Naive thymus-derived CD4-positive, alpha-beta T cell (primary cell): ENCODE measurements at regions of chr6 and their contacts with region 1.

Region 1: DNA sequence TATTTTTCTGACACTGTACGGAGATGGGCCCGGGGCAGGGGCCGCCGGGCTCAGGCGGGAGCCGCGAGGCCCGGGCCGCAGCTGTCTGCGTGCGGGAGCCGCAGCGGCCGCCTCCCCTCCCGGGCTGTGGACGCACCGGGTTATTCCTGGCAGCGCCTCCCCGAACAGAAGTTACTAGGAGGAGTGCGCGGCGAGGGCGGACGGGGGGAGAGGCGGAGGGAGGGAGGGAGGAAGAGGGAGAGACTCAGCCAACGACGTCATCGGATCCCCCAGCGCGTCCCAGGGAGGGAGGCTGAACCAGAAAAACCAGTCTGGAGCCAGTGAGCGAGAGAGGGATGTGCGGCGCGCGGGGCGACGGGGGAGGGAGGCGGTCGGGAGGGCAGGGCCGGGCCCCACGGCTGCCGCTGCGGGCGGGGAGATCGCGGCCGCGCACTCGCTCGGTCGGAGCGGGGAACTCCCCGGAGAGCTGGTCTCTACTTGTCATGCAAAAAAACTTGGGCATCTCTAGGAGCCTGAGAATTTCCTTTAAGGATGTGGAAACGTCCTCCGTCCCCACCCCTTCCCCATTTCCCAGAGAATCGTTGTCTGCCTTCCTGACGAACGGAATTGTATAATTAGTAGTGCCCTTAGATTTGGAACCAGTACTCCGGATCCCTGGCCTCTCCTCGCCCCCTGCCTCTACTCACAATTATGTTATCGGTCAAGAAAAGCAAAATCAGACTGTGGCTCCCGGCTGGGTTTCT is 1.4 kb upstream of the HIVEP2 start:
- DNase-seq: peak; percentile 74 to 98 (median 87)
- ATAC-seq: peak; percentile 65
- H3K4me3 ChIP-seq: peak overlapping the region; percentile 92
- H3K4me3 Mint-ChIP-seq: peak overlapping the region; percentile 94 to 99 (median 96)
- H3K27ac ChIP-seq: peak overlapping the region; percentile 100
- H3K27ac Mint-ChIP-seq: peak overlapping the region; percentile 75 to 100 (median 98)
- H3K4me1 ChIP-seq: peaks cover 21 to 27% of the 10 kb centered on the region in 2 donors
- H3K4me1 Mint-ChIP-seq: peaks cover 30 to 44% (median 41%) of the 10 kb centered on the region in 7 donors
- H3K27me3 ChIP-seq: no peaks in the 10 kb centered on the region
- H3K27me3 Mint-ChIP-seq: peaks cover 0 to 7% (median 0%) of the 10 kb centered on the region in 5 donors

Region 2: DNA sequence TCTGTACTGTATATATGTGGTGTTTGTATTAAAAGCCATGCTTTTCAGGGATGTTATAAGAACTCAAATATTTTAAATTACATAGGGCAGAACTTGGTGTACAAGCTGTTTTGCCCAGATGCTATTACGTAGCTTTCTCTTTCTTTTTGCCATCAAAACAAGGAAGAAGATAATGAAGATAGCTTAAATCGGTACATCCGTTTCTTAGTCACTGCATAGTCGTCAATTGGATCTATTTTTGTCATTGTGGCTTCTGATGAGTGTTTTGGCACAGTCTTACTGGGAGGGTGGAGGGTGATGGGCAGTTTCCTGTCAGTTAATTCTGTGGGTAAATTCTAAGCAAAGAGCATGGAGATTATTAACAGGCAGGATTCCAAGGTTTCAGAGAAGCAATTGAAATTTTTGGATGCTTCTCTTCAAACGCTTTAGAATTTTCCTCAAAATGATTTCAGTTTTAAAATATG is 1462.7 kb before region 1 on chr6:
- CTCF ChIA-PET with region 1: no interaction called
- POLR2A ChIA-PET with region 1: no interaction called
- intact Hi-C with region 1: loop called in 1 of 2 experiments (anchors 2 kb)
- DNase-seq: peak in 8 of 9 donors; percentile 32 to 85 (median 82)
- ATAC-seq: peak; percentile 98
- H3K4me3 ChIP-seq: peak overlapping the region; percentile 47
- H3K4me3 Mint-ChIP-seq: peak overlapping the region; percentile 74 to 93 (median 84)
- H3K27ac ChIP-seq: peak overlapping the region; percentile 68
- H3K27ac Mint-ChIP-seq: peak overlapping the region; percentile 81 to 97 (median 92)
- H3K4me1 ChIP-seq: peaks cover 11 to 24% of the 10 kb centered on the region in 2 donors
- H3K4me1 Mint-ChIP-seq: peaks cover 11 to 57% (median 41%) of the 10 kb centered on the region in 7 donors
- H3K27me3 ChIP-seq: no peaks in the 10 kb centered on the region
- H3K27me3 Mint-ChIP-seq: no peaks in the 10 kb centered on the region

Region 3: GRCh38 chr6:142692942-142693341 is 253.4 kb before region 1 on chr6:
- CTCF ChIA-PET with region 1: interaction called, 4 read pairs
- POLR2A ChIA-PET with region 1: no interaction called
- intact Hi-C with region 1: loop called in 1 of 2 experiments (anchors 2 kb)
- DNase-seq: peak; percentile 39 to 73 (median 57)
- ATAC-seq: peak; percentile 89
- H3K4me3 ChIP-seq: no peak overlapping the region
- H3K4me3 Mint-ChIP-seq: peak overlapping the region in 3 of 10 donors; percentile 0 to 27 (median 16)
- H3K27ac ChIP-seq: no peak overlapping the region
- H3K27ac Mint-ChIP-seq: peak overlapping the region in 7 of 9 donors; percentile 5 to 59 (median 40)
- H3K4me1 ChIP-seq: peaks cover 0 to 7% of the 10 kb centered on the region in 2 donors
- H3K4me1 Mint-ChIP-seq: peaks cover 9 to 31% (median 22%) of the 10 kb centered on the region in 7 donors
- H3K27me3 ChIP-seq: no peaks in the 10 kb centered on the region
- H3K27me3 Mint-ChIP-seq: peaks cover 0 to 2% (median 0%) of the 10 kb centered on the region in 5 donors

Region 4: GRCh38 chr6:142756215-142756634 is 190.1 kb before region 1 on chr6:
- CTCF ChIA-PET with region 1: no interaction called
- POLR2A ChIA-PET with region 1: no interaction called
- intact Hi-C with region 1: no loop called
- DNase-seq: no peak
- ATAC-seq: no peak
- H3K4me3 ChIP-seq: no peak overlapping the region
- H3K4me3 Mint-ChIP-seq: no peak overlapping the region
- H3K27ac ChIP-seq: no peak overlapping the region
- H3K27ac Mint-ChIP-seq: peak overlapping the region in 8 of 9 donors; percentile 21 to 88 (median 78)
- H3K4me1 ChIP-seq: no peaks in the 10 kb centered on the region
- H3K4me1 Mint-ChIP-seq: peaks cover 12 to 58% (median 41%) of the 10 kb centered on the region in 7 donors
- H3K27me3 ChIP-seq: no peaks in the 10 kb centered on the region
- H3K27me3 Mint-ChIP-seq: no peaks in the 10 kb centered on the region

Region 5: GRCh38 chr6:142857233-142857761 is 89.1 kb before region 1 on chr6:
- CTCF ChIA-PET with region 1: no interaction called
- POLR2A ChIA-PET with region 1: interaction called, 39 read pairs
- intact Hi-C with region 1: loop called (anchors 1 kb)
- DNase-seq: peak in 7 of 9 donors; percentile 54 to 77 (median 68)
- ATAC-seq: peak; percentile 59
- H3K4me3 ChIP-seq: peak overlapping the region; percentile 54
- H3K4me3 Mint-ChIP-seq: peak overlapping the region; percentile 72 to 88 (median 84)
- H3K27ac ChIP-seq: peak overlapping the region; percentile 86
- H3K27ac Mint-ChIP-seq: peak overlapping the region; percentile 91 to 100 (median 98)
- H3K4me1 ChIP-seq: peaks cover 62 to 81% of the 10 kb centered on the region in 2 donors
- H3K4me1 Mint-ChIP-seq: peaks cover 54 to 98% (median 93%) of the 10 kb centered on the region in 7 donors
- H3K27me3 ChIP-seq: no peaks in the 10 kb centered on the region
- H3K27me3 Mint-ChIP-seq: no peaks in the 10 kb centered on the region

Region 6: GRCh38 chr6:142913511-142914047 is 32.8 kb before region 1 on chr6:
- CTCF ChIA-PET with region 1: interaction called, 3 read pairs
- POLR2A ChIA-PET with region 1: interaction called, 10 read pairs
- intact Hi-C with region 1: loop called (anchors 1 kb)
- DNase-seq: peak; percentile 34 to 83 (median 80)
- ATAC-seq: peak; percentile 93
- H3K4me3 ChIP-seq: peak overlapping the region; percentile 55
- H3K4me3 Mint-ChIP-seq: peak overlapping the region; percentile 71 to 94 (median 87)
- H3K27ac ChIP-seq: peak overlapping the region; percentile 82
- H3K27ac Mint-ChIP-seq: peak overlapping the region in 7 of 9 donors; percentile 95 to 100 (median 99)
- H3K4me1 ChIP-seq: peaks cover 52 to 75% of the 10 kb centered on the region in 2 donors
- H3K4me1 Mint-ChIP-seq: peaks cover 52 to 96% (median 93%) of the 10 kb centered on the region in 7 donors
- H3K27me3 ChIP-seq: no peaks in the 10 kb centered on the region
- H3K27me3 Mint-ChIP-seq: no peaks in the 10 kb centered on the region

Region 7: DNA sequence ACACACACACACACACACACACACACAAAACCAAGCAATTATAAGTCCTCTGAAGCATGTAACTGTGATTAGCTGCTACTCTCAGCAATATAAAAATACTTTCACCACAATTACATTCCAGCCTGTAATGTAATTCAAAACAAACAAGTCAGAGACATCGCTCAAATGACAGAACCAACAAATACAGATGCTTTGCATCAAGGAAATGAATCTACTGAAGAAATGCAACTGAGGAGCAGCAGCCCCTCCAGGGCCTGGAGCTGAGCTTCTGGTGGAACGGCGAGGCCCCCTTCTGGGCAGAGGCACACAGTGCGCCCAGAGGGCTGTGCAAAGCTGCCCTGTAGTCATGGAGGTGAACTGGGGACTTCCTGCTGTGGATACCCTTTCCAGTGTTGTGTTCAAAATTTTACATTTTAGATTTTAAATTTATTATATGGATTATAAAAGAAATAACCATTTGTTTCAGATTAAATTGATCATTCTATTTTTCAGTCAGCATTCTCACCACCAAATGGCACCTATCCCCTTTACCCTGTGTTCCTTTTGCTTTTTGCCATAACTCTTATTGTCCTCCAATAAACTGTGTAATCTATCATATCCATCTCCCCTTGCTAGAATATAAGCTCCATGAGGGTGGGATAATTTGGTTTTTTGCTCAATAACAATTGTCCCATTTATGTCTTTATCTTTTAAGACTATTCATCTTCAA is 480.9 kb after region 1 on chr6:
- CTCF ChIA-PET with region 1: no interaction called
- POLR2A ChIA-PET with region 1: no interaction called
- intact Hi-C with region 1: loop called in 1 of 2 experiments (anchors 5 kb)
- DNase-seq: peak; percentile 53 to 80 (median 73)
- ATAC-seq: peak; percentile 99
- H3K4me3 ChIP-seq: no peak overlapping the region
- H3K4me3 Mint-ChIP-seq: no peak overlapping the region
- H3K27ac ChIP-seq: no peak overlapping the region
- H3K27ac Mint-ChIP-seq: peak overlapping the region in 3 of 9 donors; percentile 25 to 75 (median 28)
- H3K4me1 ChIP-seq: no peaks in the 10 kb centered on the region
- H3K4me1 Mint-ChIP-seq: peaks cover 0 to 5% (median 0%) of the 10 kb centered on the region in 7 donors
- H3K27me3 ChIP-seq: no peaks in the 10 kb centered on the region
- H3K27me3 Mint-ChIP-seq: no peaks in the 10 kb centered on the region

Region 8: GRCh38 chr6:144063744-144064401 is 1117.5 kb after region 1 on chr6:
- CTCF ChIA-PET with region 1: no interaction called
- POLR2A ChIA-PET with region 1: no interaction called
- intact Hi-C with region 1: loop called (anchors 5 to 10 kb)
- DNase-seq: peak; percentile 84 to 91 (median 88)
- ATAC-seq: peak; percentile 96
- H3K4me3 ChIP-seq: peak overlapping the region; percentile 56
- H3K4me3 Mint-ChIP-seq: peak overlapping the region; percentile 87 to 94 (median 91)
- H3K27ac ChIP-seq: peak overlapping the region; percentile 85
- H3K27ac Mint-ChIP-seq: peak overlapping the region; percentile 83 to 97 (median 88)
- H3K4me1 ChIP-seq: peaks cover 0 to 12% of the 10 kb centered on the region in 2 donors
- H3K4me1 Mint-ChIP-seq: peaks cover 17 to 44% (median 29%) of the 10 kb centered on the region in 7 donors
- H3K27me3 ChIP-seq: no peaks in the 10 kb centered on the region
- H3K27me3 Mint-ChIP-seq: peaks cover 0 to 2% (median 0%) of the 10 kb centered on the region in 5 donors